Dorsolateral prefrontal cortex (tissue), 120 donors: ENCODE measurements at regions of chr3 and their contacts with region 1.

Region 1: GRCh38 chr3:69197455-69198185 is 75.2 kb upstream of the LMOD3 start:
- DNase-seq: no peak
- H3K4me3 ChIP-seq: no peak overlapping the region
- H3K27ac ChIP-seq: peak overlapping the region in 17 of 59 donors; percentile 5 to 66 (median 43)
- H3K27me3 ChIP-seq: no peaks in the 10 kb centered on the region
- CTCF ChIP-seq: no peak

Region 2: DNA sequence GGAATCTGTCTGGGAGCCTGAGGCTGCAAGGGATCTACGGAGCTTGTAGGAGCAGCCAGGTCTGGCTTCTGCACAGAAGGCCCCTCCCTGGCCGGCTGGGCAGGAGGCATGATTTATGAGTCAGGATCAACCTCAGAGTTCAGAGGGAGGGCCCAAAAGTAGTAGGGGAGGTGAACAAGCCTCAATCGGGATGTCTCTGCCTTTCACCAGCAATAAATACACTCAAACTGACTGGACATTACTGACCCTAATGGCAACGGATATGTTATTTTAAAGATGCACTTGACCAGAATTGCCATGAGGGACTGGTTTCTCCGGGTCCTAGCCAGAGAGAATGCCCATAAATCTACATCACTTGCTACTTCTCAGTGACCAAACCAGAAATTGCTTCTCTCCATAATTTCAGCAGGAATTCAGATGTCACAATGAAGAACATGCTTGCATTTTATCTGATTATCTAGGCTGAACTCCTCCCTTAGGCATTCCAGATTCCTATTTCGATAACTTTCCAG is 34.4 kb after region 1 on chr3:
- intact Hi-C with region 1: loop called in 1 of 2 experiments (anchors 5 kb)
- DNase-seq: no peak
- H3K4me3 ChIP-seq: no peak overlapping the region
- H3K27ac ChIP-seq: peak overlapping the region in 41 of 59 donors; percentile 6 to 78 (median 46)
- H3K27me3 ChIP-seq: no peaks in the 10 kb centered on the region
- CTCF ChIP-seq: no peak